ENCODE measurements at regions of chr12 and their contacts with region 1.

Region 1: DNA sequence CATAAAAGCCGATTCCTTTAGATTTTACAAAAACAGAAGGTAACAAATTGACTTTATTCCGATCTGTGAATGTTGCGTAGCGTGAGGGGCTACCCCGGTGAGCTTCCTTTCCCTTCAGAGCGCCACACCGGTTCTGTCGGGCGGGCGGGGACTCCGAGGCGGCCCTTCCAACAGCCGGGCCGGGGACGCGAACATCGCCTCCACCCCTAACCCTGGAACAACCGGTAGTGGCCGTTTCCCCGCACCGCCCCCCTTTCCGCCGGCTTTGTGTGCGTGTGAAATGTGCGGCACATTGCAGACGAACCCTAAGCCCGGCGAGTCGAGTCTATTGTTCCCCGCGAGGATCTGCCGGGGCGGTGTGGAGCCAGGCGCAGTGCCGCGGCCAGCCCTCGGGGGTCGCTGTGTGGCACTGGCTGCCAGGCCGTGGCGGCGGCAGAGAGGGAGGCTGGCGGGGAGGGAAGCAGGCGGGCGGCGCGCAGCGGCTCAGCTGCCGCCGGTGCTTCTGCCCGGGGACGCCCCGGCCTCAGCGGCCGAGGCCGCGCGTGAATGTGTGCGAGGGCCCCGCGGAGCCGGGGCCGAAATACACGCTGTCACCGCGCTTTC is 775 bp upstream of the ARID2 start:
- DNase-seq: peak; percentile 97 to 99 (median 97)
- ATAC-seq: peak; percentile 79 to 88 (median 81)
- H3K4me3 ChIP-seq: peak overlapping the region; percentile 64 to 94 (median 83)
- H3K27ac ChIP-seq: peak overlapping the region; percentile 94 to 100 (median 98)
- H3K4me1 ChIP-seq: peaks cover 9 to 58% (median 40%) of the 10 kb centered on the region in 12 donors
- H3K27me3 ChIP-seq: no peaks in the 10 kb centered on the region
- CTCF ChIP-seq: peak; percentile 85 to 99 (median 97)
- POLR2A ChIP-seq: peak in 1 of 2 donors; percentile 81

Region 2: DNA sequence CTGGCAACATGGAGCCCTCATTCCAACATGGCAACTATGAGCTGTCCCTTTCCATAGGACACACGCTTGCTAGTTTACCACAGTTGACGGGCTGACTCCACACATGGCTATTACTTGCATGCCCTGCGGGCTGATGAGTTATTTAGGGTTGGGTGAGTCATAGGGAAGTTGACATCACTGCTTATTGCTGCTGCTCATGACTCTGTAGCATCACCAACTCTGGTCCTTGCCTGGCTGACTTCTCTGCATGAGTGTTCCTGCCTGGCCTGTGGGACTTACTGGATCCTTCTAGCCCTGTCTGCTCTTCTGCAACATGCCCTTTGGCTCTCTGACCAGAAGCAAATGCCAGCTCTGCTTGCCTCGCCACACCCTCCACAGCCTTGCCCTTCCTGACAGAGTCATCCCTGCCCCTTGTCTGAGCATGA is 313.3 kb before region 1 on chr12:
- intact Hi-C with region 1: loop called in 1 of 10 experiments (anchors 10 kb)
- DNase-seq: peak in 4 of 5 donors; percentile 54 to 84 (median 62)
- ATAC-seq: peak; percentile 94 to 99 (median 98)
- H3K4me3 ChIP-seq: no peak overlapping the region
- H3K27ac ChIP-seq: peak overlapping the region in 10 of 12 donors; percentile 8 to 80 (median 66)
- H3K4me1 ChIP-seq: peaks cover 0 to 15% (median 6%) of the 10 kb centered on the region in 12 donors
- H3K27me3 ChIP-seq: no peaks in the 10 kb centered on the region
- CTCF ChIP-seq: no peak
- POLR2A ChIP-seq: no peak

Region 3: GRCh38 chr12:45990468-45991283 is 261.9 kb after region 1 on chr12 and contains the start of gene SCAF11:
- intact Hi-C with region 1: loop called in 6 of 10 experiments (anchors 2 to 5 kb)
- DNase-seq: peak; percentile 100
- ATAC-seq: peak; percentile 90 to 96 (median 94)
- H3K4me3 ChIP-seq: peak within 1 kb of the TSS; percentile 73 to 98 (median 90)
- H3K27ac ChIP-seq: peak within 1 kb of the TSS; percentile 96 to 100 (median 99)
- H3K4me1 ChIP-seq: peaks cover 0 to 48% (median 35%) of the 10 kb centered on the region in 12 donors
- H3K27me3 ChIP-seq: no peaks in the 10 kb centered on the region
- CTCF ChIP-seq: peak; percentile 91 to 99 (median 94)
- POLR2A ChIP-seq: peak; percentile 66 to 75
- total RNA-seq, gene SCAF11: 71.3 to 148 (median 98.7) TPM